Psoas muscle (tissue), 8 donors: ENCODE measurements at regions of chr2 and their contacts with region 1.

Region 1: GRCh38 chr2:229921892-229922445 is at the start of gene TRIP12:
- DNase-seq: peak; percentile 91 to 97
- ATAC-seq: peak; percentile 89 to 92 (median 92)
- H3K4me3 ChIP-seq: peak within 1 kb of the TSS; percentile 76
- H3K27ac ChIP-seq: peak within 1 kb of the TSS; percentile 97
- H3K4me1 ChIP-seq: peaks cover 7% of the 10 kb centered on the region
- H3K27me3 ChIP-seq: no peaks in the 10 kb centered on the region
- CTCF ChIP-seq: no peak
- total RNA-seq, gene TRIP12: 224 to 297 (median 255) TPM

Region 2: GRCh38 chr2:228094377-228094921 is 1827.5 kb before region 1 on chr2:
- intact Hi-C with region 1: no loop called
- DNase-seq: no peak
- ATAC-seq: no peak
- H3K4me3 ChIP-seq: no peak overlapping the region
- H3K27ac ChIP-seq: no peak overlapping the region
- H3K4me1 ChIP-seq: no peaks in the 10 kb centered on the region
- H3K27me3 ChIP-seq: no peaks in the 10 kb centered on the region
- CTCF ChIP-seq: no peak

Region 3: DNA sequence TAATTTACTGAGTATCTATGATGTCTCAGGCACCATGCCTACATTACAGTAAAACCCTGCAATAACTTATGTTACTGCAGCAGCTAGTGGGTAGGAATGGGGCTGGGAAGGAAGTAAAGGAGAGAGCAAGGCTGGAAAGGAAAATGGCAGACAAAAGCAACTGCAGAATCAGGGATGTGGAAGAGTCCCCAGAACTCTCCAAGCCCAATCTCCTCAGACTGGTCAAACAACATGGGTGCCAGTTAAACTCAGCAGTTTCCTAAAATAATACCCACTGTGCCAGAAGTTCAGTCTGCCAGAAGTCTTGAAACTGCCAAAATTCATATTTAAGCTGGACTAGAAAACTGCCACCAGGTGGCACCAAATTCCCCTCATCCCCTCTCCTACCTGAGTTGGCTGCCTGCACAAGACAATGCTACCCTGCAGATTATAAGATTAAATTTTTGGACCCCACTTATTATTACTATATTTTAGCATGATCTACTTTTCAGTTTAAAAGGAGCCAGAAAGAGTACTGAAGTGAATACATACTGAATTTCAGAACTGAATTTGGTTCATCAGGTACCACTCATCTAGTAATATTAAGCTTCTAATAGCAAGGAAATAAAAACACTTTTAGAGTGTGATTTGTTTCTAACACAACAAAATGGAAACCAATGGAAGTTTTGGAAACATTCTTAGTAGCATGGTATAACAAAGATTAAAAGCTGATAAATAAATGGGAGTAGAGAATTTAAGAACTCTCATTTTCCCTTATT is 120.8 kb before region 1 on chr2:
- intact Hi-C with region 1: loop called (anchors 2 to 5 kb)
- DNase-seq: peak; percentile 34 to 59
- ATAC-seq: peak; percentile 51 to 86 (median 64)
- H3K4me3 ChIP-seq: no peak overlapping the region
- H3K27ac ChIP-seq: no peak overlapping the region
- H3K4me1 ChIP-seq: peaks cover 9% of the 10 kb centered on the region
- H3K27me3 ChIP-seq: no peaks in the 10 kb centered on the region
- CTCF ChIP-seq: peak; percentile 78

Region 4: GRCh38 chr2:229875549-229875948 is 46.4 kb before region 1 on chr2:
- intact Hi-C with region 1: loop called in 1 of 2 experiments (anchors 5 kb)
- DNase-seq: no peak
- ATAC-seq: no peak
- H3K4me3 ChIP-seq: no peak overlapping the region
- H3K27ac ChIP-seq: no peak overlapping the region
- H3K4me1 ChIP-seq: peaks cover 9% of the 10 kb centered on the region
- H3K27me3 ChIP-seq: no peaks in the 10 kb centered on the region
- CTCF ChIP-seq: no peak

Region 5: DNA sequence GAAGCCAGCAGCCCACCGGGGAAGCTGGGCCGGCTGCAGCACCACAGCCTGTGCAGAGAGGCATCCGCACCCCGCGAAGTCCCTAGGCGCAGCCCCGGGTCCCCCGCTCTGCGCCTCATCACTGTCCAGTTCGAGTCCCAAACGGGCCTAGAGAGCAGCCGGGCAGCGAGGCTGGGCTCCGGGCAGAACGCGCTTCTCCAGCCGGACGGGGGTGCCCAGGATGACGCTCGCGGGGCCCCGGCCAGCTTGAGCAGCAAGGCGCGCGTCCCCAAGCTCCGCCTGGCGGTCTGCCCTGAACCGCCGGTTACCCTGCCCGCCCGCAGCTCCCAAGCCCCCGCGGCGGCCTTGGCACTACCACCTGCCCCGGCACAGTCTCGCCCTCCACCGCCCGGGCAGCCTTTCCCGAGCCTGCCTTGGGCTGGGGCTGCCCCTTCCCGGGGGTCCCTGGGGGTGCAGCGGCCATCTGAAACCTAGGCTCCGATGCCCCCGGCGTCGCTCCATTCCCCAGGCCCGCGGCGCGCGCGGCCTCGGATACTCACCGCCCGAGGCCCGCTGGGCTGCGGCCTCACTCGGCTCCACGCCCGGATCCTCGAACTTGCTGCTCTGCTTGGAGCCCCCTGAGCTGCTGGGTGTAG is 146.2 kb after region 1 on chr2:
- intact Hi-C with region 1: no loop called
- DNase-seq: peak; percentile 35 to 69
- ATAC-seq: peak; percentile 27 to 72 (median 48)
- H3K4me3 ChIP-seq: peak overlapping the region; percentile 69
- H3K27ac ChIP-seq: no peak overlapping the region
- H3K4me1 ChIP-seq: peaks cover 12% of the 10 kb centered on the region
- H3K27me3 ChIP-seq: peaks cover 0 to 25% (median 4%) of the 10 kb centered on the region in 3 donors
- CTCF ChIP-seq: peak; percentile 7